PC-9 (cell line): ENCODE measurements at regions of chr2 and their contacts with region 1.

Region 1: DNA sequence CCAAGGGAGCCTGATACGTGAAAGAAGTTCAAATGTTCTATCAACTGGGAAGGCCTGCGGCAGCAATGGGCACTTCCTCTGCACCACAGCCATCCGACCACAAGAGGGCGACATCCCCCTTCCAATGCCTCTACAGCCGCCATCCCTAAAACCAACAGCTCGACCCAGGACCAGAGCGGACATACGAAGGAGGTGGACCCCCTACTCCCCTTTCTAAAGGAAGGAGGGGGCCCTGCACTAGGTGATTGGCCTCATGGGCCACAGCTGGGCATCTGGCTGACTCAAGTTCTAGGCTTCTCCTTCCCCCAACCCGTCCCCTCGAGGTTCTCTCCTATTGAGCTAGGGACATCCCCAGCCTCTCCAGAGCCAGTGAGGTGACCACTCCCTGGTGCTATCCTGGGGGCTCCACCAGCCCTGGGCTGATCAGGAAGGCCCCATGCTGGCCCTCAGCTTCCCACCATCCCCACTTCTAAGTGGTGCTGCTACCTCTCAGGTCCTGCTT is 217.2 kb downstream of the TNS1 start:
- DNase-seq: peak in 1 of 2 experiments; percentile 75
- H3K4me3 ChIP-seq: no peak overlapping the region
- H3K27ac ChIP-seq: no peak overlapping the region
- H3K4me1 ChIP-seq: no peaks in the 10 kb centered on the region
- H3K27me3 ChIP-seq: no peaks in the 10 kb centered on the region; the same call in 1 of the 2 replicates
- CTCF ChIP-seq: peak; percentile 93

Region 2: DNA sequence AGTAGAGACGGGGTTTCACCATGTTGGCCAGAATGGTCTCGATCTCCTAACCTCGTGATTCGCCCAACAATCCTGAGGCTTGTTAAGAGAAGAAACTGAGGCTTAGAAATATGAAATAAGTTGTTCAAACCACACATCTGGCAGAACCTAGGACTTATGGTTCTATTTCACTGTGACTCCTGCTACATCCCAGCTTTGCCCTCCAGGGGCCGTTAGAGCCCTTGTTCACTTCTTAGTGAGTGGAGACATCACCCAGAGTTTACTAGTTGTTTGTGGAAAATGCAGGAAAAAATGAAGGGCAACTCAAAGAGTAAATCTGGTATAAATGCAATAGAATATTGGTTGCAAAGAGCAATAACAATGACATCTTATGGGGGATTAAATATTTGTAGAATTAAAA is 1457.2 kb before region 1 on chr2:
- CTCF ChIA-PET with region 1: no interaction called
- POLR2A ChIA-PET with region 1: interaction called, 18 read pairs
- intact Hi-C with region 1: no loop called
- DNase-seq: no peak
- H3K4me3 ChIP-seq: no peak overlapping the region
- H3K27ac ChIP-seq: no peak overlapping the region
- H3K4me1 ChIP-seq: peaks cover 10% of the 10 kb centered on the region
- H3K27me3 ChIP-seq: no peaks in the 10 kb centered on the region
- CTCF ChIP-seq: no peak

Region 3: DNA sequence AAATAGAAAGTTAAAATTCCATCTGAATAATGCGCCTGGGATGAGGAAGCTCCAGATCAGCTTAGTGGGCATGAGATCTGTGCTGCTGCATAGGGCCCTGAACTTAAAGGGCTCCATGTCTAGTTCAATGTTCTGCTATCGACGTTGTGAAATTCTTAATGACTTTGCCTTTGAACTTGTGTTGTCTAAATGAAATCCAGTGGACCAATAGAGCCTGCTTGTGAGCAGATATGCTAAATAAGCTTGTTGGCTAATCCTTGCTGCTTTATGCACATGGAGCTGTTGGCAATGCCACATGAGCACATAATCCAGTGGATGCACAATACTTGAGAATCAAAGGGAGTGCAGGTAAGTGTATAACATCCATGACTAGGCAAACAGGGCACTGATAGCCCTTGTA is 11.4 kb before region 1 on chr2:
- CTCF ChIA-PET with region 1: no interaction called
- POLR2A ChIA-PET with region 1: no interaction called
- intact Hi-C with region 1: no loop called
- DNase-seq: no peak
- H3K4me3 ChIP-seq: no peak overlapping the region
- H3K27ac ChIP-seq: no peak overlapping the region
- H3K4me1 ChIP-seq: no peaks in the 10 kb centered on the region
- H3K27me3 ChIP-seq: no peaks in the 10 kb centered on the region
- CTCF ChIP-seq: no peak

Region 4: DNA sequence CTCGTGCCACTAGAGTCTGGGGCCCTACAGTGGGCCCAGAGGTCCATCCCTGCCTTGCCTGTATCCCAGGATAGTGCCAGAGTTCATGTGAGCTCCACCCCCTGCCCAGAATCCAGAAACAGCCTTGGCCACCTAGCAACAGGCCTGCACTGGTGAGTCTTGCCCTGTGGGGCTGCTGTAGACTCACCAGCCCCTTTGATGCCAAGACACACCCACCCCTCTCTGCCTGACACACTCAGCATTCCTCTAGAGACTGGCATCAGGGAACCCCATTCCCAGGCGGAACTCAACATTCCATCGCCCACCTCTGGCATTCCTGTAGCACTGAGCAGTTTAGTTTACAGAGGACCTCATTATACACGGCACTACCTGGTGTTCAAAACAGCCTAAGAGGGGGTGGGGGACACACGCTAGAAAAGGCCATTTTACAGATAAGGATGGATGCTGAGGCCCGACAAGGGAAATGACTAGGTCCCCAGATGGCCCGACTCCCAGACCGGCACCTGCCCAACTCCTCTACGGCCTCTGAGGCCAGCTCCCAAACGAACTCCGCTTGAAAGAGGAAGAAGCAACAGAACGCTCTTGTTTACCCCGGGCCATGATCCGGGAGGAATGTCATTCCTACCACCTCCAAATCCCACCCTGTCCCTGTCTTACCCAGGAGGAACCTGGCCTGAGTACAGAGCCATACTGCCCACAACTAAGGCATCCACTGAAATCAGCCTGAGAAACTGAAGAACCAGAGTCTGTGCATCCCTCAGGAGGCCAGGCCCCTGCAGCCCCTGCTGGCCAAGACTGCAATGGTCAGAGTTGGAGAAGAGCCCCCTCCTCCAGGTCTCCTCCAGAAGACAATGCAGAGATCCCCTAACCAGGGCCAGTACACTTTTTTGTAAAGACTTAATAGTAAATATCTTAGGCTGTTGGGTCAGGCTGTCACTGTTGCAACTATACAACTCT is 37.0 kb after region 1 on chr2:
- CTCF ChIA-PET with region 1: no interaction called
- POLR2A ChIA-PET with region 1: no interaction called
- intact Hi-C with region 1: no loop called
- DNase-seq: peak in 1 of 2 experiments; percentile 13
- H3K4me3 ChIP-seq: no peak overlapping the region
- H3K27ac ChIP-seq: no peak overlapping the region
- H3K4me1 ChIP-seq: no peaks in the 10 kb centered on the region
- H3K27me3 ChIP-seq: peaks cover 18% of the 10 kb centered on the region; the same call in 1 of the 2 replicates
- CTCF ChIP-seq: no peak

Region 5: GRCh38 chr2:217988014-217988839 is 202.6 kb after region 1 on chr2:
- CTCF ChIA-PET with region 1: interaction called, 4 read pairs
- POLR2A ChIA-PET with region 1: no interaction called
- intact Hi-C with region 1: loop called (anchors 1 kb)
- DNase-seq: peak; percentile 90 to 93
- H3K4me3 ChIP-seq: no peak overlapping the region; the same call in 1 of the 2 replicates
- H3K27ac ChIP-seq: peak overlapping the region; percentile 79
- H3K4me1 ChIP-seq: peaks cover 18% of the 10 kb centered on the region
- H3K27me3 ChIP-seq: no peaks in the 10 kb centered on the region
- CTCF ChIP-seq: peak; percentile 86

Region 6: DNA sequence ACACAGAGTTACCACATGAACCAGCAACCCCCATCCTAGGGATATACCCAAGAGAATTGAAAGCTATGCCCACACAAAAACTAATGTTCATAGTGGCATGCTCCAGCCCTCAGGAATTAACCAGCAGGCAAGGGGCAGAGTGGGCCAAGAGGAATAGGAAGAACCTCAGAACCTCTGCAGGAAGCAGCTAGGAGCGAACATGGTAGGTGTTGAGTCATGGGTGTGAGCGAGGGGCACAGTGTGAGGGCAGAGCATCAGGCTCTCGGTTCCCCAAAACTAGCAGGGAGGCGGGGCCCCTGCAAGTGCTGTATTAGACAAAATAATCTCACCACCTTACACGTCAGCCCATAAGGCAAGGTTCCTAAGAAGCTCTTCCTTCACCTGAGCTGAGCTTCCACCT is 277.9 kb after region 1 on chr2:
- CTCF ChIA-PET with region 1: interaction called, 14 read pairs
- POLR2A ChIA-PET with region 1: no interaction called
- intact Hi-C with region 1: loop called (anchors 1 kb)
- DNase-seq: no peak
- H3K4me3 ChIP-seq: no peak overlapping the region
- H3K27ac ChIP-seq: no peak overlapping the region
- H3K4me1 ChIP-seq: no peaks in the 10 kb centered on the region
- H3K27me3 ChIP-seq: peaks cover 27% of the 10 kb centered on the region
- CTCF ChIP-seq: no peak

Region 7: GRCh38 chr2:218395797-218396687 is 610.4 kb after region 1 on chr2:
- CTCF ChIA-PET with region 1: no interaction called
- POLR2A ChIA-PET with region 1: no interaction called
- intact Hi-C with region 1: loop called (anchors 5 kb)
- DNase-seq: peak; percentile 83 to 95
- H3K4me3 ChIP-seq: peak overlapping the region; percentile 89
- H3K27ac ChIP-seq: peak overlapping the region; percentile 79
- H3K4me1 ChIP-seq: peaks cover 20% of the 10 kb centered on the region
- H3K27me3 ChIP-seq: no peaks in the 10 kb centered on the region
- CTCF ChIP-seq: peak; percentile 86